ENCODE measurements at regions of chr9 and their contacts with region 1.

Region 1: GRCh38 chr9:28616310-28616709 is 1043.0 kb upstream of the C9orf72 start:
- DNase-seq: no peak
- ATAC-seq: no peak
- H3K4me3 ChIP-seq: no peak overlapping the region
- H3K27ac ChIP-seq: no peak overlapping the region
- H3K4me1 ChIP-seq: no peaks in the 10 kb centered on the region
- H3K27me3 ChIP-seq: no peaks in the 10 kb centered on the region
- CTCF ChIP-seq: no peak
- POLR2A ChIP-seq: no peak

Region 2: DNA sequence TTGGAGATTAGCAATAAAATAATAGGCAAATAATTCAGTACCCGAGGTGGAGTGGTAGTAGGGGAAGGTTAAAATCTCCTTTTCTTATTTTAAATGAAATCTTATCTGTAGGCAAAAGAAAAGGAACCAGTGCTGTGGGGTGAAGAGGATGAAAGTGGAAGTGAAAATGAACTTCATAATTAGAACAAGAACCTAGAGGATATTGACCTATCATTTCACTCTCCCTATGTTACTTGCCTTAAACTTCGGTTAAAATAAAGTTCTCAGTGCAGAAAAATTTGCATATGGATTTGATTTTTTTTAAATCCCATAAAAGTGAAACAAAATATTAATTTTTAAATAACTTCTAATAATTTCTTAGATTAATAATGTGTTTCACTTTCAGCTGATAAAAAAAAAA is 51.8 kb after region 1 on chr9:
- intact Hi-C with region 1: loop called in 1 of 10 experiments (anchors 10 kb)
- DNase-seq: no peak
- ATAC-seq: no peak
- H3K4me3 ChIP-seq: no peak overlapping the region
- H3K27ac ChIP-seq: no peak overlapping the region
- H3K4me1 ChIP-seq: no peaks in the 10 kb centered on the region
- H3K27me3 ChIP-seq: no peaks in the 10 kb centered on the region
- CTCF ChIP-seq: no peak
- POLR2A ChIP-seq: no peak

Region 3: DNA sequence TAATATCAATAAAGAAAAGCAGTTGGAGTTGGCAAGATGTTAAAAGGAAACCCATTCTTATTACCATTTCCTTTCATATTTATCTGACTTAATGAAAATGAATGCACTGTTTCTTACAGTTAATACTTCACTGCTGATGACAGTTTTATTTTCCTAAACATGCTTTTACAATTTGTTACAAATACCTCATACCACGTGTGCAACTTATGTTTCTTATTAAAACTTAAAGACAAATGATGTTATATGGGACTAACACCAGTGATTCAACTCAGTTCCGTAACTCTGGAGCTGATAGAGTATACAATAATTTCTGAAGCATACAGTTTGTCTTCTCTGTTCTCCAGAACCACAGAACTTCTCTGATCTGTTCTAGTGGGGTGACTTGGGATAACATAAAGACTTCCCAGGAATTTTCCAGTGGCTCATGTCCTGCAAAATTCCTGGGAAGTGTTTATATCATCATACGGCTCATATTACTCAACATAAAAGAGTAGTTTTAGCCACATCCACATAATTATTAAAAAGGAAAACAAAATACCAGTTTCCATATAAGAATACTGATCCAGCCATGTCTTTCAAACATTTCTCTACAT is 216.0 kb after region 1 on chr9:
- intact Hi-C with region 1: no loop called
- DNase-seq: no peak
- ATAC-seq: no peak
- H3K4me3 ChIP-seq: no peak overlapping the region
- H3K27ac ChIP-seq: no peak overlapping the region
- H3K4me1 ChIP-seq: no peaks in the 10 kb centered on the region
- H3K27me3 ChIP-seq: no peaks in the 10 kb centered on the region
- CTCF ChIP-seq: no peak
- POLR2A ChIP-seq: no peak